Activated B cell treated with CpG ODN at 0.5 μM for 24 hours (primary cell): ENCODE measurements at regions of chr4 and their contacts with region 1.

Region 1: DNA sequence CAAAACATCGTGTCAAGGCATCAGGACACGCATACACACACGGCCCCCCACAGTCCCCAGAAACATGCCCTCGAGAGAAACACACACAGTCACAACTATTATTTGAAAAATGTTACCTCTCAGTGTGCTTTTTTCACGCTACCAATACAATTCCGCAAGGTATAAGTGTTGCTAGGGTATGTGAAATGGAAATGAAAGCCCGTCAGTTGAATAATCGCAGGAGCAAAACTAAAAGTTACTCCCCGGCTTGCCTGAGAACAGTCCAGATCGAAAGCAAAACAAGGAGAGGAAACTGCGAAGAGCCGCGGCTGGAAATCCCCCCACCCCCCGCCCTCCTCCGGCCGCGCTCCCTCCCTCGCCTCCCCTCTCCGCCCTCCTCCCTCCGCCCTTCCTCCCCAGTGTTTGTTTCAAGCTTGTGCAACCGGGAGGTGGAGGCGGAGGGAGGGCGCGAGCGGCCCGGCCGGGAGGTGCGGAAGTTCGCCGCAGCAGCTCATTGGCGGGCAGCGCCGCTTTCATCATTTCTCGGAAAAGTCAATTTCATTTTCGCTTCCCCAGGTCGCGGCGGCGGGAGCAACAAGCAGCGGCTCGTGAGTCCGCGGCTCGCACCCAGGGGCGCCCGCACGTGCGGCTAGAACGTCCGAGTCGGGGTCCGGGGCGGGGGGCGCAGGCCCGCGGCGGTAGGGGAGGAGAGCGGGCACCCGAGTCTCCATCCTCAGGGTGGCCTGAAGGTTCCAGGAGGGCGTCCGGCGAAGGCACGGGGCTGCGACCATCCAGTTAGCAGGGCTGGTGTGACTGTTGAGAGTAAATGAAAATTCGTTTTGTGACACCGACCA is at the start of gene IRF2:
- DNase-seq: peak; percentile 86
- ATAC-seq: peak; percentile 80
- H3K4me3 Mint-ChIP-seq: peak within 1 kb of the TSS; percentile 94
- H3K27ac Mint-ChIP-seq: peak within 1 kb of the TSS; percentile 96
- H3K4me1 Mint-ChIP-seq: peaks cover 63% of the 10 kb centered on the region
- H3K27me3 Mint-ChIP-seq: no peaks in the 10 kb centered on the region
- CTCF ChIP-seq: no peak
- total RNA-seq, gene IRF2: 65.5 and 66.2 TPM in 2 replicates

Region 2: DNA sequence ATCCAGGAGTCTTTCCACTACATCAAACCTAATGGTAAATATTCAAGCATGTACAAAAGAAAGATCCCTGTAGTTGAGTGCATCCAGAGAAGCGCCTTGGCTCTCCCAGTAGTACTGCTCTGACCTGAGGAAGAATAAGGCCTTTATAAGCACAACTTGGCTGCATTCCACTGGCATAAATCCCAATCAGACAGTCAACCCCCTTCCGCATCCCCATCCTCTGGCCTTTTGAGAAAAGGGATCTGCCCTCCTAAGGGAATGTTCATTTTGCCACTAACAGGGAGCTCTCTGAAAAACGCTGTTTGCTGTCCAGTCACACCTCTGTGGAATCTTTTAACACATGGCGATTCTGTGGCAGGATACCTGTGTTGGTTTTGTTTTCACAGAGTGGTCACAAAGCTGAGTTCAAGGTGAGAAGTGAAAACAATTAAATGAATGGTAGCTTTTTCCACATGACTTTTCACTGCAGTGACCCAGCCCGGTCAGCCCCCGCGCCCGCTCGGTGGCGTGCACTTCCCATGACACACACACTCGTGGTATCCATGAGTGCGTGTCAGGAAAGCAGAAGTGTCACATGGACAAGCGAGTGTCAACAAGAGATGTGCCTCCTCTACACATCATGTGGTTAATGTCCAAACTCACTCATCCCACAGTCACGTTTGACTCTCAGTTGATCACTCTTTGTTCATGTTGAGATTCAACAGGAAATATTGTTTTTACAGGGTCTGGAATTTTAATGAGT is 144.6 kb before region 1 on chr4:
- CTCF ChIA-PET with region 1: interaction called, 4 read pairs
- POLR2A ChIA-PET with region 1: interaction called, 43 read pairs
- intact Hi-C with region 1: loop called (anchors 2 kb)
- DNase-seq: no peak
- ATAC-seq: peak; percentile 26
- H3K4me3 Mint-ChIP-seq: peak overlapping the region; percentile 47
- H3K27ac Mint-ChIP-seq: peak overlapping the region; percentile 97
- H3K4me1 Mint-ChIP-seq: peaks cover 78% of the 10 kb centered on the region
- H3K27me3 Mint-ChIP-seq: no peaks in the 10 kb centered on the region
- CTCF ChIP-seq: no peak

Region 3: DNA sequence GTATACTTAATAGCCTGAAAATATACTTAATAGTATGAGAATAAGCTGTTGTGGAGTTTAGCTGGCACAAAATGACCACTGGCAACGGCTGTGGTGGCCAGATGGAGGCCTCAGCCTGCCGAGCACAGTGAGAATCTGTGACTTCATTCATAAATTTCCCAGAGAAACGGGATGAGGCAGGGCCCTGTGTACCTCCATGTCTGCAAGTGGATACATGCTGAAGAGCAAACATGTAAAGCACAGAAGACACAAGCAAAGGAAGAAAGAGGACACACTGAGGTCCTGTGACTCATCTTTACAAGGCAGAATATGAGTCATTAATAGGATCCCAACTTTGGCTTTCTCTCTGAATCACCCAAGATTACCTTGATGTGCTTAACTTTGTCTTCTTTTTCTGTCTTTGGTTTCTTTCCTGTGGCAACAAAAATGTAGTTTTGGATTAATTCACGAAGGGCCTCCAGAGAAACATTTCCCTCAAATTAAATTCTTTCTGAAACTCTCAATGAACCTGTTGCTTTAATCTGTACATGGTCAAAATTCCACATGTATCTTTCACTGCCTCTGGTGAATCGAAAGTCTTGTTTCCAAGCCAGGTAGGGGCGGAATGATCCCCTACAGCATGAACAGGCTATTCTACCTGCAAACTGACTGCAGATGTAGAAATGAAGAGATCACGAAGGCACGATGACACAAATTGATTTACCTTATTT is 56.5 kb before region 1 on chr4:
- CTCF ChIA-PET with region 1: no interaction called
- POLR2A ChIA-PET with region 1: interaction called, 24 read pairs
- intact Hi-C with region 1: loop called (anchors 1 kb)
- DNase-seq: no peak
- ATAC-seq: peak; percentile 65
- H3K4me3 Mint-ChIP-seq: peak overlapping the region; percentile 55
- H3K27ac Mint-ChIP-seq: peak overlapping the region; percentile 89
- H3K4me1 Mint-ChIP-seq: peaks cover 81% of the 10 kb centered on the region
- H3K27me3 Mint-ChIP-seq: no peaks in the 10 kb centered on the region
- CTCF ChIP-seq: no peak

Region 4: DNA sequence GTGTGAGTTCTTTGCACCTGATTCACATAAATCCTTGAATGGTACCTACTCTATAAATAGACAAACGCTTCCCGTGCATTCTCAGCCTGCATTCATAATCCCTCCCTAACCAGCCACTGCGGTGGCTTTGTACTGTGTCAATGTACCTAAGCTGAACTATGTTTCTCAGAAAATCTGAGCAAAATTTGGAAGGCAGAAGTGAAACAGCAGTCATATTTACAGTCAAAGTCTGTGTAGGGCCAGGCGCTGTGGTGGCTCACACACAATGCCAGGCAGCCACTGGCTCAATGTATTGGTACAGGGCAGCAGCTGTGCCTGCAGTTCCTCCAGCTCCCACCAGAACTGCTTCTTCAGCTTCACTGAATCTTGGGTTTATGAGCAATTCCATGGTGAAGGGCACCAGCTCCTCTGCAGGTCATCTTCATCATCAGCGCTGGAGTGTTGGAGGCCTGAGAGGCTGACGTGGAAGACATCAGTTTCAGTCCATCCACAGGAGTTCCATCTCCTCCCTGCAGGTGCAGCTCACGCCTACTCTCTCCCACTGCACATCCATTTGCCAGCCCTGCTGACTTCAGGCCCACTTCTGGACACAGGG is 32.1 kb after region 1 on chr4:
- CTCF ChIA-PET with region 1: interaction called, 12 read pairs
- POLR2A ChIA-PET with region 1: interaction called, 72 read pairs
- intact Hi-C with region 1: loop called (anchors 1 kb)
- DNase-seq: peak; percentile 38
- ATAC-seq: peak; percentile 98
- H3K4me3 Mint-ChIP-seq: peak overlapping the region; percentile 67
- H3K27ac Mint-ChIP-seq: peak overlapping the region; percentile 88
- H3K4me1 Mint-ChIP-seq: peaks cover 58% of the 10 kb centered on the region
- H3K27me3 Mint-ChIP-seq: no peaks in the 10 kb centered on the region
- CTCF ChIP-seq: no peak

Region 5: DNA sequence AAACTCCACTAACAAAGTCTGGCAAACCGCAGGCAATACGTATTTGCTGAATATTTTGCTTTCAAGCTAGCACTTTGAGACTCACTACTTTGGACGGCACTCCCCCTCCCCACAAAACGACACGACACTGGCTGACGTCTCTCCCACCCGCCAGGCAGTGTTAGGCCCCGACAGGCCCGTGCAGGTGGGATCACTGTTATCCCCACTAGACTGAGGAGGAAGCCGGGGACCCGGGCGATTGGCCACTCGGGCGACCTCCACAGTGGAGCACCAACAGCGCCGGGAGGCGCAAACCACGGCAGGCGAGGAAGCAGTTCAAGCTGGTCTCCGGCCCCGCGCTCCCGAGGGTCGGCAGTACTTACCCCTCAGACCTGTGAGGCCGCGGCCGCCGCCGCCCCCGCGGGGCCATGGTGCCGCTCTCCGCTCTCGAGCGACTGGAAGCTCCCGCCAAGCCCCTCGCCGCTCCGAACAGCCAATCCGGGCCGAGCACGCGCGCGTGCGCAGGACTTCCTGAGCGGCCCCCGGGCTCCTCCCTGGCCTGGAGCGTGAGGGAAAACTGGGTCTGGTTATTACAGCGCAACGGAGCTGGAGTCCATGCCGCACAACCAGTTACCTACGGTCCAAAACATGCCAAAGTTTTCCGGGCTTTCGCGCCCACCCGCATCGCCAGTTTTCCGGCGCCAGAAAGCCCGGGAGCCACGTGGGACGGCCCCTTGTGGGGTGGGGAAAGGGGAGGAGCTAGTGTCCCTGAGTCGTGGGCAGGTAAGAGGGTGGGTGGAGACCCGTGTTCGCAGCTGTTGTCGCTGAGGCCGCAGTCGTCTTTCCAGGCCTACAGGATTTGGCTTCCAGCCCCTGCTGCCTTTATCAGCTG is 259.4 kb after region 1 on chr4 and contains the start of gene CENPU:
- CTCF ChIA-PET with region 1: no interaction called
- POLR2A ChIA-PET with region 1: interaction called, 3 read pairs
- intact Hi-C with region 1: loop called (anchors 2 kb)
- DNase-seq: peak; percentile 95
- ATAC-seq: peak; percentile 96
- H3K4me3 Mint-ChIP-seq: peak within 1 kb of the TSS; percentile 88
- H3K27ac Mint-ChIP-seq: peak within 1 kb of the TSS; percentile 85
- H3K4me1 Mint-ChIP-seq: peaks cover 19% of the 10 kb centered on the region
- H3K27me3 Mint-ChIP-seq: no peaks in the 10 kb centered on the region
- CTCF ChIP-seq: no peak
- total RNA-seq, gene CENPU: 7.0 and 7.1 TPM in 2 replicates